ENCODE measurements at regions of chr19 and their contacts with region 1.

Region 1: DNA sequence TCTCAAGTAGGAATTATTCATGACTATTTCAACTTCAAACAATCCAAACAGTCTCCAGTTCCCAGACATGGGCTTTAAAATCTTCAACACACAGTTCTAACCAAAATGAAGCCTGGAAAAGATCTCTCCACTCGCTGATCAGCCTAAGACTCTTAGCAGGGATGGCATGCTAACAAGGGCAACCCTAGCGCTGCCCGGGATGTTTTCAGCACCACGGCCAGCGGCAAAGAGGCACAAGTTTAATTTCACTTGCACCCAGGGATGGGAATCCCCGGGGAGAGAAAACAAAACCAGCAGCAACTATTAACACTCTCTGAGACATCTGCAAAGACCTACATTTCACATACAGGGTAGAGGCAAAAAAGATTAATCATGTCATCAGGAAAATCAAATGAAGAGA is 43.0 kb downstream of the CACNA1A start:
- DNase-seq: peak; percentile 64
- H3K4me3 ChIP-seq: no peak overlapping the region
- H3K27ac ChIP-seq: no peak overlapping the region
- H3K4me1 ChIP-seq: no peaks in the 10 kb centered on the region
- H3K27me3 ChIP-seq: peaks cover 15% of the 10 kb centered on the region
- CTCF ChIP-seq: no peak

Region 2: DNA sequence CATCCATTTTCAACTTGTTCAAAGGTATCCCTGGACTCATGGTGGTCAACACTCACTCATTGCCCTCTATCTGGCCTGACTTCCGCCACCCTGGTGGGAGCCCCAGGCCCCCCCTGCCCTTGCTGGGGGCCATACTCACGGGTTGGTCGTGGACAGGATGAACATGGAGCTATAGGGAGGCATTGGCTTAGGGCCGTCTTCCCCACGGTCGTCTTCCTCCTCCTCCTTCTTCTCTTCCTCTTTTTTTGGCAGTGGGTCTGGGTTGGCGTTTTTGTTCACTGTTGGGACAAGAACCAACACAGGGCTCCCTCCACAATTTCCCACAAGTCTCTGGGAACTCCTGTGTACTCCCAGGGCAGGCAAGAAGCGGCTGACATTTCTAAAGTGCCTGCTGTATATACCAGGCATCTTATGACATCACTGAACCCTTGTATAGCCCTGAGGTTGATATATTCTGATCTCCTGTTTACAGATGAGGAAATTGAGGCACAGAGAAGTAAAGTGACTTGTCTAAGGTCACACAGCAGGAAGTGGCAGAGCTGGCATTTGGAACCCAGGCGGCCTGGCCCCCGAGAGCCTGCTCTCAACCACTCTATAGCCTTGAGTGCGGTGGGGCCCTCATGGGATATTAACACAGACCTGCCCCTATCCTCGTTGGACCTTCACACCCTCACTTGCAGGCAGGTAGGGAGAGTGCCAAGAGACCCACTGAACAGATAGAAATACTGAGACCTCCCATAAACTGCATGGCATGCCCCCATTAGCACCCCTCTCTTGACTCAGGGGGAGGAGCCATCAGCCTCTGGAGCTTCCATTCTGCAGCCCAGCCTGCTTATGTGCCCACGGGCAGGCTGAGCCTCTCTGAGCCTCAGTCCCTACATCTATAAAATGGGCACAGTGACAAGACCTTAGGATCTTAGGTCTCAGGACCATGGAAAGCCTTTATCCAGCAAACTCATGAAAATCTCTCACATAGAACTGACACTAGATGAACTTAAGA is 178.1 kb before region 1 on chr19:
- CTCF ChIA-PET with region 1: no interaction called
- POLR2A ChIA-PET with region 1: no interaction called
- intact Hi-C with region 1: no loop called
- DNase-seq: no peak
- H3K4me3 ChIP-seq: no peak overlapping the region
- H3K27ac ChIP-seq: no peak overlapping the region
- H3K4me1 ChIP-seq: peaks cover 10% of the 10 kb centered on the region
- H3K27me3 ChIP-seq: no peaks in the 10 kb centered on the region
- CTCF ChIP-seq: no peak

Region 3: GRCh38 chr19:13441810-13442512 is 21.3 kb before region 1 on chr19:
- CTCF ChIA-PET with region 1: no interaction called
- POLR2A ChIA-PET with region 1: no interaction called
- intact Hi-C with region 1: loop called (anchors 2 kb)
- DNase-seq: peak; percentile 64
- H3K4me3 ChIP-seq: no peak overlapping the region
- H3K27ac ChIP-seq: no peak overlapping the region
- H3K4me1 ChIP-seq: no peaks in the 10 kb centered on the region
- H3K27me3 ChIP-seq: no peaks in the 10 kb centered on the region
- CTCF ChIP-seq: no peak